Calu3 (cell line): ENCODE measurements at regions of chr16 and their contacts with region 1.

Region 1: DNA sequence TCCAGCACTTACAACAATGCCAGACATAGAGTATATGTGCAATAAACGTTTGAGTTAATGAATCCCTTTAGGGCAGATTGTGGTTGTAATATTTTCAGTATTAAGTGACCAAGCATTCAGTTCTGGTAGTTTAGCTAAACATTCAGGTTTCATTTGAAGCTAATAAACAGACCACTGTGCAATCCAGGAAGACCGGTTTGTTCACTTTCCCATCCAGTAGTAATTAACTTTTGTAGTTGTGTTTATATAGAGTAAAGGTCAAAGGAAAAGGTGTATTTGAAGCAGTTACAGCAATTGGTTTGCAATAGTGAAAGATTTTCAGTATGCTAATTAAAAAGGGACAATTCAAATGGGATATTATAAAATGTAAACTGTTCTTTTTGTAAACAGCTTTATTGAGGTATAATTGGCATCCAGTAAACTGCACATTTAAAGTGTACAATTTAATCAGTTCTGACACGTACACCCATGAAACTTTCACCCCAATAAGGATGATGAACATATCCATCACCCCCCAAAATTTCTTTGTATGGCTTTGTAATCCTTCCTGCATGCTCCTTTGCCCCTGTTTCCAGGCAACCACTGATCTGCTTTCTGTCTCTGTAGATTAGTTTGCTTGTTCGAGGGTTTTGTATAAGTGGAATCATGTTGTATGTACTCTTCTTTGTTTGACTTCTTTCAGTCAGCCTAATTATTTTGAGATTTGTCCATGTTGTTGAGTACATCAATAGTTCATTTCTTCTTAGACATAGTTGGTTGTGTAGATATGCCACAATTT is 26.3 kb downstream of the MRTFB start:
- DNase-seq: peak; percentile 76
- H3K4me3 Mint-ChIP-seq: peak overlapping the region; percentile 67
- H3K27ac Mint-ChIP-seq: peak overlapping the region; percentile 99
- H3K4me1 Mint-ChIP-seq: peaks cover 68% of the 10 kb centered on the region
- H3K27me3 Mint-ChIP-seq: no peaks in the 10 kb centered on the region
- CTCF ChIP-seq: no peak

Region 2: GRCh38 chr16:14050297-14051036 is 46.9 kb before region 1 on chr16:
- CTCF ChIA-PET with region 1: no interaction called
- intact Hi-C with region 1: loop called (anchors 1 kb)
- DNase-seq: peak; percentile 66
- H3K4me3 Mint-ChIP-seq: no peak overlapping the region
- H3K27ac Mint-ChIP-seq: no peak overlapping the region
- H3K4me1 Mint-ChIP-seq: peaks cover 9% of the 10 kb centered on the region
- H3K27me3 Mint-ChIP-seq: no peaks in the 10 kb centered on the region
- CTCF ChIP-seq: no peak

Region 3: DNA sequence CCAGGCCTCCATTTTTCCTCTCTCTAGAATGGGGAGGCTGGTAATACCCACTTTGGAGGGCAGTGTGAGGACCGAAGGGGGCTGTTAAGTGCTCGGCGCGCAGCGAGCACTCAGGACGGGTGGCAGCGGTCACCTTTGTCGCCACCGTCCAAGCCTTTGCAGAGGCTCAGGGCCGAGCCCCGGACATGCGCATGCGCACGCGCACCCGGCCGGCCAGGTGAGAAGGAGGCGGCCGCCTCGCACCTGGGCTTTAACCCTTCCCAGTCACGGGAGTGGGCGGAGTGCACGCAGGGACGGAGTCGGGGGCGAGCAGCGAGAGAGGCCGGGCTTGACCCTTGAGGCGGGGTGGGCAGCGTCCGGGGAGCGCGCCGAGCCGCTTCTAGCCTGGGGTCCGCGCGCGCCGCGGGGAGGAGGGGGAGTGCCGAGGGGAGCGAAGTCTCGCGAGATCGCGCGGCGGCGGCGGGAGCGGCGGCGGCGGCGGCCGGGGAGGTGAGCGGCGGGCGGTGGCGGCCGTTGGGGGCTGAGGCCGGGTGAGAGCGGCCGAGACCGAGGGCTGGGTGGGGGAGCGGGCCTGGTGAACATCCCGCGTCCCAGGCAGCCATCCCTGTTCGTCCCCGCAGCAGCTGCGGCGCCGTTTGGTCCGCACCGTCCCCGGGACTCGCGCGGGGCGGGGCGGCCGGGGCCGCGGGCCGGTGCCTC is 26.3 kb before region 1 on chr16 and contains the start of gene MRTFB:
- CTCF ChIA-PET with region 1: interaction called, 7 read pairs
- intact Hi-C with region 1: loop called (anchors 2 kb)
- DNase-seq: peak; percentile 94
- H3K4me3 Mint-ChIP-seq: peak within 1 kb of the TSS; percentile 93
- H3K27ac Mint-ChIP-seq: peak within 1 kb of the TSS; percentile 94
- H3K4me1 Mint-ChIP-seq: peaks cover 43% of the 10 kb centered on the region
- H3K27me3 Mint-ChIP-seq: no peaks in the 10 kb centered on the region
- CTCF ChIP-seq: no peak
- total RNA-seq, gene MRTFB: 67.3 and 69.5 TPM in 2 replicates

Region 4: GRCh38 chr16:14111713-14112540 is 14.6 kb after region 1 on chr16:
- CTCF ChIA-PET with region 1: interaction called, 11 read pairs
- intact Hi-C with region 1: loop called (anchors 2 kb)
- DNase-seq: no peak
- H3K4me3 Mint-ChIP-seq: no peak overlapping the region
- H3K27ac Mint-ChIP-seq: no peak overlapping the region
- H3K4me1 Mint-ChIP-seq: peaks cover 42% of the 10 kb centered on the region
- H3K27me3 Mint-ChIP-seq: no peaks in the 10 kb centered on the region
- CTCF ChIP-seq: no peak

Region 5: GRCh38 chr16:14117059-14117458 is 19.7 kb after region 1 on chr16:
- CTCF ChIA-PET with region 1: no interaction called
- intact Hi-C with region 1: loop called (anchors 2 kb)
- DNase-seq: no peak
- H3K4me3 Mint-ChIP-seq: no peak overlapping the region
- H3K27ac Mint-ChIP-seq: no peak overlapping the region
- H3K4me1 Mint-ChIP-seq: peaks cover 21% of the 10 kb centered on the region
- H3K27me3 Mint-ChIP-seq: no peaks in the 10 kb centered on the region
- CTCF ChIP-seq: no peak

Region 6: DNA sequence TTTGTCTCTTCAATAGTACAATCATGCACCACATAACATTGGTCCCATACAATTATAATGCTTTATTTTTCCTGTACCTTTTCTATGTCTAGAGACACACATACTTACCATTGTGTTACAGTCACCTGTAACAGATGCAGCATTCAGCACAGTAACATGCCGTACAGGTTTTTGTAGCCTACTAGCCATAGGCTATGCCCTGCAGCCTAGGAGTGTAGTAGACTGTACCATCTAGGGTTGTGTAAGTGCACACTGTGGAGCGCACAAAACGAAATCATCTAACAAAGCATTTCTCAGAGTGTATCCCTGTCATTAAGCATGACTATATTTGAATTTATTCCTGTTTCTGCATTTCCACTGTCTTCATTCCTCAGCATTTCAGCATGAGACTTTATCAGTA is 37.9 kb after region 1 on chr16:
- CTCF ChIA-PET with region 1: no interaction called
- intact Hi-C with region 1: loop called (anchors 5 kb)
- DNase-seq: no peak
- H3K4me3 Mint-ChIP-seq: no peak overlapping the region
- H3K27ac Mint-ChIP-seq: no peak overlapping the region
- H3K4me1 Mint-ChIP-seq: peaks cover 8% of the 10 kb centered on the region
- H3K27me3 Mint-ChIP-seq: no peaks in the 10 kb centered on the region
- CTCF ChIP-seq: no peak

Region 7: DNA sequence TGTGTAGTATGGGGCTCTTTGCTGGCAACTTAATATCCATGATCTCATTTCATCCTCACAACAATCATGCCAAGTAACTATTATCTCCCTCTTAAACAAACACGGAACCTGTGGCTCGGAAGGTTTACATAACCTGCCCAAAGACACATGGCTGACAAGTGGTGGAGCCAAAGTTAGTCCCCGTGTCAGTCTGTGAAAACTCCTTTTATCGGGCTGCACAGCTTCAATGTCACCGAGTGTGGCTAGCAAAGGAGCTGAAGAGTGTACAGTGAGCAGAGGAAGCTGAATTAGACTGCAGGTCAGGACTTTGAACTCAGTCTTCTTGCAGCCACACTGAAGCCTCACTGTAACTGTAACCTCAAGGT is 452.4 kb after region 1 on chr16:
- CTCF ChIA-PET with region 1: no interaction called
- intact Hi-C with region 1: loop called (anchors 10 kb)
- DNase-seq: peak; percentile 30
- H3K4me3 Mint-ChIP-seq: peak overlapping the region; percentile 44
- H3K27ac Mint-ChIP-seq: peak overlapping the region; percentile 64
- H3K4me1 Mint-ChIP-seq: peaks cover 51% of the 10 kb centered on the region
- H3K27me3 Mint-ChIP-seq: no peaks in the 10 kb centered on the region
- CTCF ChIP-seq: no peak